ENCODE measurements at regions of chr1 and their contacts with region 1.

Region 1: DNA sequence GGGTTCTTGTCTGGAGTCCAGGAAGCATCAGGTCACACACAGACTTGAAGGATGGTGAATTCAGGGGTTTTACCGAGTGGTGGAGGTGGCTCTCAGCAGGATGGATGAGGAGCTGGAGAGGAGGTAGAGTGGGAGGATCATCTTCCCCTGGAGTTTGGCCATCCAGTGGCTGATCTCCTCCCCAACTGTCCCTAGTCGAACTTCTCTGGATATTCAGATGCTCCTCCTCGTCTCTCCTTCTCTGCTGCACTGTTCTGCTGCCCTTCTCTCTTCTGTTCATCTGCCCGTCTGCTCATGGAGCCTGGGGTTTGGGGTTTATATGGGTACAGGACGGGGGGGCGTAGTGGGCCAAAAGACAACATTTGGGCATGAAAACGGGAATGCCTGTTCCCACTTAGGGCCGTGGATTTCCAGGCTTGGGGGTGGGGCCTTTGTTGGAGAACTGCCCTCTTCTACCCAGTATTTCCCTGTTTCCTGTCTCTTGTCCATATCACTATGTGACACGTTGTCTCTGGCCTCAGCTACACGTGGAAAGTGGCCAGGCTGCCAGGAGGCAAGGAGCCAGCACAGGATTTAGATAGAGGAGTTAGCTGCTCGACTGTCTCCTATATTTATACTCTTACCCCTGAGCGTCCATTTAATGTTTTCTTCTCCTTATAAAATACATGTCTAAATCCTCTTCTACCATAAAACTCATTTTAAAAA is 76.7 kb downstream of the SIPA1L2 start:
- DNase-seq: peak; percentile 85 to 89
- ATAC-seq: peak; percentile 73 to 93 (median 90)
- H3K4me3 ChIP-seq: peak overlapping the region in 3 of 10 donors; percentile 2 to 13 (median 8)
- H3K27ac ChIP-seq: peak overlapping the region in 9 of 10 donors; percentile 7 to 87 (median 77)
- H3K4me1 ChIP-seq: peaks cover 4 to 95% (median 77%) of the 10 kb centered on the region in 9 donors
- H3K27me3 ChIP-seq: no peaks in the 10 kb centered on the region
- CTCF ChIP-seq: no peak

Region 2: GRCh38 chr1:232319072-232319471 is 234.1 kb before region 1 on chr1:
- intact Hi-C with region 1: loop called in 1 of 10 experiments (anchors 2 kb)
- DNase-seq: peak; percentile 83 to 85
- ATAC-seq: peak; percentile 90 to 97 (median 95)
- H3K4me3 ChIP-seq: no peak overlapping the region
- H3K27ac ChIP-seq: peak overlapping the region; percentile 25 to 89 (median 78)
- H3K4me1 ChIP-seq: peaks cover 0 to 30% (median 3%) of the 10 kb centered on the region in 9 donors
- H3K27me3 ChIP-seq: no peaks in the 10 kb centered on the region
- CTCF ChIP-seq: no peak

Region 3: DNA sequence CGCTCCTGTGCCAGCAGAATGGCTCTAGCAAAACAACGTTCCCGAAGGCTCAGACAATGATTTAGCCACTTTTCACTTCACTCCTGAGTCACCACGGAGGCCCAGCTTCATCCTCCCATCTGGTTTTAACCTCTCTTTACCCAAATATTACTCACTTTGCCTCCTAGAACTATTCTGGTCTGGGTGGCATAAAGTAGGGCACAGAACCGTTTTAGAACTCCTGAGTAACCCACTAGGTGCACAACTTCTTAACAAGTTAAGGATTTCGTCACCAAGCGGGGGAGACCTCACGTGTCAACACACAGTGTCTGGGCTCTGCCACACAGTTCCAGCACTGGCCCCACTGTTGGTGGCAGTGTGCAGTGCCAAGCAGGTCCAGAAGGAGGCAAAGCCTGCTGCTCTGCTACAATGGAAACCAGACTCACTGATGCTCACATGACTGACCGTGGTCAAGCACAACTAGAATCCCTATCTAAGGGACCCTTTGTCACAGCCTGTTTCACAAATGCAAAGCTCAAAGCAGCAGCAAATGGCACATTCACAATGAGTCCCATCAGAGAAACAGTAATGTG is 45.0 kb before region 1 on chr1:
- intact Hi-C with region 1: loop called in 1 of 10 experiments (anchors 5 kb)
- DNase-seq: no peak
- ATAC-seq: peak in 5 of 8 donors; percentile 49 to 76 (median 63)
- H3K4me3 ChIP-seq: no peak overlapping the region
- H3K27ac ChIP-seq: peak overlapping the region in 5 of 10 donors; percentile 2 to 49 (median 15)
- H3K4me1 ChIP-seq: peaks cover 16 to 71% (median 46%) of the 10 kb centered on the region in 9 donors
- H3K27me3 ChIP-seq: no peaks in the 10 kb centered on the region
- CTCF ChIP-seq: peak in 5 of 9 donors; percentile 21 to 43 (median 34)

Region 4: GRCh38 chr1:232643251-232643650 is 90.0 kb after region 1 on chr1:
- intact Hi-C with region 1: no loop called
- DNase-seq: no peak
- ATAC-seq: no peak
- H3K4me3 ChIP-seq: no peak overlapping the region
- H3K27ac ChIP-seq: no peak overlapping the region
- H3K4me1 ChIP-seq: no peaks in the 10 kb centered on the region
- H3K27me3 ChIP-seq: no peaks in the 10 kb centered on the region
- CTCF ChIP-seq: peak in 3 of 9 donors; percentile 3 to 14 (median 13)